Activated CD4-positive, alpha-beta T cell treated with anti-CD3 and anti-CD28 coated beads for 36 hours (primary cell): ENCODE measurements at regions of chr7 and their contacts with region 1.

Region 1: DNA sequence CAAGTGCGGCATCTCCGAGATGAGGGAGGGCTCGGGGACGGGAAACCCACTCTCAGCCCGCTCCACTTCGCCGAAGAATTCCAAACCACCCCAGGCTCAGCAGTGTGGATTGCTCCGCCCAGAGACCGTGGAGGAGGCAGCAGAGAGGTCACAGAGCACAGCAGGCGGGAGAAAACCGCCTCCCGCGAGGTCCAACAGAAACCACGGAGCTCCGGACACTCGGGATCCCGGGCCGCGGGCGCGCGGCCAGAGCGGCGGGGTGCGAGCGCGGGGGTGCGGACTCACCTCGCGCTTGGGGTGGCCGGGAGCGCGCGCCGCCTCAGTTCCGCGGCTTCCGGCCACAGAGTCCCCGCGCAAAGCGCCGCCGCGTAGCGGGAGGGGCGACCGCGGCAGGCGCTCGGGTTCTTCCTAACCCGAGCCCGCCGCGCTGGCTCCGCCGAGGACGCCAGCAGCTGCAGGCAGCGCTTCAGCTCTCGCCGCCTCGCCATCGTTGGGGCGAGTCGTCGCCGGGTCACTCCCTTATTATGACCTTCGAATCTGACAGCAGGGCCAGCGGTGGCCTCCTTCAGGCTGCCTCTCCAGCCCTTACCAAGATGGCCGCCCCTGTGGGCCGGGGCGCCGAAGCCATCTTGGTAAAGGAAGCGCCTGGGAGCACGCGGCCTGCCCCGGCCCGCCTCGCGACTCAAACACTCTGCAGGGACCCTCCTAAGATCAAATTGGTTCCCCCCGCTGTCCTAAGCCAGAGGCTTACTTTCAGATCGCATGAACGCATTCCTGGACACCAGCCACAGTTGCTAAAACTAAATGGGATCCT is at the start of gene NAPEPLD:
- DNase-seq: peak; percentile 79
- ATAC-seq: peak; percentile 76
- H3K4me3 Mint-ChIP-seq: peak within 1 kb of the TSS; percentile 93
- H3K27ac Mint-ChIP-seq: peak within 1 kb of the TSS; percentile 100
- H3K4me1 Mint-ChIP-seq: peaks cover 32% of the 10 kb centered on the region
- H3K27me3 Mint-ChIP-seq: peaks cover 1% of the 10 kb centered on the region
- total RNA-seq, gene NAPEPLD: 4.7 TPM

Region 2: GRCh38 chr7:103074519-103075336 is 74.5 kb before region 1 on chr7 and contains the starts of genes ARMC10 and FBXL13:
- CTCF ChIA-PET with region 1: interaction called, 3 read pairs
- POLR2A ChIA-PET with region 1: interaction called, 6 read pairs
- intact Hi-C with region 1: loop called (anchors 1 to 2 kb)
- DNase-seq: peak; percentile 93
- ATAC-seq: peak; percentile 84
- H3K4me3 Mint-ChIP-seq: peak within 1 kb of the TSS; percentile 91
- H3K27ac Mint-ChIP-seq: peak within 1 kb of the TSS; percentile 93
- H3K4me1 Mint-ChIP-seq: peaks cover 28% of the 10 kb centered on the region
- H3K27me3 Mint-ChIP-seq: no peaks in the 10 kb centered on the region
- total RNA-seq, gene ARMC10: 42.6 to 50.1 TPM
- total RNA-seq, gene FBXL13: 0.32 to 0.83 TPM

Region 3: DNA sequence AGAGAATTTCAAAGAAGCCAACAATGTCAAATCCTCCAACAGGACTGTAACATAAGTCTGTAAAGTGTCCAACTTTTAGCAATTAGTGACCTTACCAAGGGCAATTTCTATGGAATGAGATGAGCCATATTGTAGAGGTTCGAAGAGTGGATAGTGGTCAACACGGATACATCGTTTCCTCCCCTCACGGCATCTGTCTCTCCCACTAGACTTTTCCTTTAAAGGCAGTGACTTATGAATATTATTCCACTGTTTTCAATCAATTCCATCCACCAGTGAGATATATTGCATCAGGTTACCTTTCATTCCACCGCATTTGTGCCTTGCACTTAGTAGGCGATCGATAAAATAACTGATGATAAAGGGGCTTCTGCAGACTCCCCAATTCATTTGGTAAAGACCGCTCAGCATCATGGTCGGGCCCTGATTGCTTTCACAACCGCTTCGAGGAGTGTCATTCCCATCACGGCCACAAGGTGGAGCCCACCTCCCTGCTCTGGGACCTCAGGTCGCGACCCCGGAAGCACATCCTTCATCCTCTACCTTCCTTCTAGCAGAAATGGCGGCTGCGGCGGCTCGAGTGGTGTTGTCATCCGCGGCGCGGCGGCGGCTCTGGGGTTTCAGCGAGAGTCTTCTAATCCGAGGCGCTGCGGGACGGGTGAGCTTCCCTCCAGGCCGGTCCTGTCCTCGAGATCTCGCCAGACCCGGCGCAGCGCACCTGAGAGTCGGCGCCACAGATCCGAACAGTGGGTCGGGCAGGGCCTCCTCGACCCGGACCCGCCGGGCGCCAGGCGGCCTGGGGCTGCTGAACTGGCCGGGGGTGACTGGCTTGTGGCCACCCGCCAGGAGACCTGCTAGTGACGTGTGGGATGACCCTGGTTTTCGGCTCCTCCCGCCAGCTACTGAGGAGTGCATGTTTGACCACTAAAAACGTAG is 148.0 kb after region 1 on chr7 and contains the start of gene PMPCB:
- CTCF ChIA-PET with region 1: interaction called, 3 read pairs
- POLR2A ChIA-PET with region 1: no interaction called
- intact Hi-C with region 1: loop called in 1 of 2 experiments (anchors 5 kb)
- DNase-seq: peak; percentile 98
- ATAC-seq: peak; percentile 98
- H3K4me3 Mint-ChIP-seq: peak within 1 kb of the TSS; percentile 89
- H3K27ac Mint-ChIP-seq: peak within 1 kb of the TSS; percentile 93
- H3K4me1 Mint-ChIP-seq: peaks cover 33% of the 10 kb centered on the region
- H3K27me3 Mint-ChIP-seq: no peaks in the 10 kb centered on the region
- total RNA-seq, gene PMPCB: 70.7 to 86.9 TPM

Region 4: GRCh38 chr7:104045183-104045582 is 896.0 kb after region 1 on chr7:
- CTCF ChIA-PET with region 1: no interaction called
- POLR2A ChIA-PET with region 1: no interaction called
- intact Hi-C with region 1: no loop called
- DNase-seq: no peak
- ATAC-seq: no peak
- H3K4me3 Mint-ChIP-seq: no peak overlapping the region
- H3K27ac Mint-ChIP-seq: no peak overlapping the region
- H3K4me1 Mint-ChIP-seq: no peaks in the 10 kb centered on the region
- H3K27me3 Mint-ChIP-seq: peaks cover 9% of the 10 kb centered on the region